Activated naive CD4-positive, alpha-beta T cell treated with anti-CD3 and anti-CD28 coated beads, Interleukin-2, amount 10 ng/mL, durations not matched to agents 7 days and 5 days (primary cell): ENCODE measurements at regions of chr14 and their contacts with region 1.

Region 1: GRCh38 chr14:104563742-104564615 is 15.6 kb upstream of the C14orf180 start:
- DNase-seq: peak; percentile 79
- H3K4me3 Mint-ChIP-seq: no peak overlapping the region
- H3K27ac Mint-ChIP-seq: no peak overlapping the region
- H3K4me1 Mint-ChIP-seq: no peaks in the 10 kb centered on the region
- H3K27me3 Mint-ChIP-seq: peaks cover 25% of the 10 kb centered on the region

Region 2: GRCh38 chr14:104094709-104095438 is 469.1 kb before region 1 on chr14:
- CTCF ChIA-PET with region 1: interaction called, 11 read pairs
- DNase-seq: peak; percentile 81
- H3K4me3 Mint-ChIP-seq: no peak overlapping the region
- H3K27ac Mint-ChIP-seq: peak overlapping the region; percentile 14
- H3K4me1 Mint-ChIP-seq: peaks cover 4% of the 10 kb centered on the region
- H3K27me3 Mint-ChIP-seq: peaks cover 4% of the 10 kb centered on the region